CD8-positive, alpha-beta memory T cell (primary cell): ENCODE measurements at regions of chr7 and their contacts with region 1.

Region 1: GRCh38 chr7:35630024-35630972 is 64.6 kb downstream of the HERPUD2 start:
- DNase-seq: no peak
- H3K4me3 ChIP-seq: no peak overlapping the region
- H3K4me3 Mint-ChIP-seq: no peak overlapping the region
- H3K27ac ChIP-seq: no peak overlapping the region
- H3K27ac Mint-ChIP-seq: peak overlapping the region; percentile 10 to 88 (median 52)
- H3K4me1 ChIP-seq: no peaks in the 10 kb centered on the region
- H3K4me1 Mint-ChIP-seq: peaks cover 0 to 4% (median 0%) of the 10 kb centered on the region in 3 donors
- H3K27me3 ChIP-seq: no peaks in the 10 kb centered on the region
- H3K27me3 Mint-ChIP-seq: no peaks in the 10 kb centered on the region

Region 2: DNA sequence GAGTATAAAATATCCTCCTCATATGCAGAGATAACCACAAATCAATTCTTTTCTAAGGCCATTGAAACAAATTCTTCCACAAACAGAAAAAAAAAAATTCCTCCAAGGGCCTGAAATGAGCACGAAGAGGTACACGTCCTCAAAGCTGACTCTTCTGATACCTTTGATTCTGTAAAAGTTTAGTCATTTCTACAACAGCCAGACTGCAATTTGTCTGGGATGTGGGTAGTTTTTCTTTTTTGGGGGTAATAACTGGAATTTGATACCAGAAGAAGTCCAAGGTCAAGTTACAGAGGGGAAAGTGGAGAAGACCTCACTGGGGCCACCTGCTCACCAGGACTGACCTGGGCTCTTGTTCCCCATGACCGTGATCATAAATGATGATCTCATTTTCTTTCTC is 972.2 kb after region 1 on chr7:
- CTCF ChIA-PET with region 1: no interaction called
- POLR2A ChIA-PET with region 1: interaction called, 10 read pairs
- DNase-seq: no peak
- H3K4me3 ChIP-seq: no peak overlapping the region
- H3K4me3 Mint-ChIP-seq: no peak overlapping the region
- H3K27ac ChIP-seq: no peak overlapping the region
- H3K27ac Mint-ChIP-seq: peak overlapping the region in 3 of 8 donors; percentile 54 to 78 (median 68)
- H3K4me1 ChIP-seq: peaks cover 22% of the 10 kb centered on the region
- H3K4me1 Mint-ChIP-seq: peaks cover 21 to 46% (median 35%) of the 10 kb centered on the region in 3 donors
- H3K27me3 ChIP-seq: no peaks in the 10 kb centered on the region
- H3K27me3 Mint-ChIP-seq: no peaks in the 10 kb centered on the region